Posterior vena cava (tissue), 2 donors: ENCODE measurements at regions of chr6 and their contacts with region 1.

Region 1: GRCh38 chr6:3721810-3722626 is 29.5 kb downstream of the PXDC1 start:
- DNase-seq: no peak

Region 2: GRCh38 chr6:3612341-3613041 is 109.5 kb before region 1 on chr6:
- intact Hi-C with region 1: loop called in 1 of 2 experiments (anchors 10 kb)
- DNase-seq: no peak

Region 3: GRCh38 chr6:3697609-3698008 is 24.4 kb before region 1 on chr6:
- intact Hi-C with region 1: no loop called
- DNase-seq: no peak